Transverse colon (tissue), 4 donors: ENCODE measurements at regions of chr6 and their contacts with region 1.

Region 1: DNA sequence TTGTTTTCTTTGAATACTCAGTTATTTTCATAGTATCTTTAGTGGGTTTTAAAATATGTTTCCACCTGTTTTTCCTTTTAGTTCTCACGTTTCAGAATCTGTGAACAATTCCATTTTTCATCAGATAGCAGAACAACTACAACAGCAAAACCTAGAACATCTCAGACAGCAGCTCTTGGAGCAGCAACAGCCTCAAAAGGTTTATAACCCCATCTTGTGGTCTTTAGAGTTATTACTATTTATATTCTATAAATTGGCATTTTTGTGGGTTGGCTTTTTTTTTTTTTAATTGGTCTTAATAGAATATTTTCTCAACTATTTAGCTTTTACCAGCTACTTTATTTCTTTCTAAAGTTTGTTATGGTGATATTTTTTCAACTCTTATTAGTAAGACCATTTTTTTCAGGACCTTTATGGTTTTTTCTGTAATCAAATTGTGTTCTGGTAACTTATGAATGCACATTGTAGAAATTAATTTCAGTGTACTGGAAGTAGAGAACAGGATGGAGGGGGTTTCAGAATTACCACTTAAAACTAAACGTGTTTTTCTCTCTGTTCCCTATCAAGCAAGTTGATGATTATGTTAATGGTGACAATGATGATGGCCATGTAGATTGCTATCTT is 72.2 kb downstream of the SCAF8 start:
- DNase-seq: no peak
- H3K4me3 ChIP-seq: no peak overlapping the region
- H3K27ac ChIP-seq: no peak overlapping the region
- H3K4me1 ChIP-seq: peaks cover 0 to 4% (median 0%) of the 10 kb centered on the region in 4 donors
- H3K27me3 ChIP-seq: no peaks in the 10 kb centered on the region
- CTCF ChIP-seq: peak; percentile 21 to 41 (median 32)
- EP300 ChIP-seq: no peak
- POLR2A ChIP-seq: no peak

Region 2: DNA sequence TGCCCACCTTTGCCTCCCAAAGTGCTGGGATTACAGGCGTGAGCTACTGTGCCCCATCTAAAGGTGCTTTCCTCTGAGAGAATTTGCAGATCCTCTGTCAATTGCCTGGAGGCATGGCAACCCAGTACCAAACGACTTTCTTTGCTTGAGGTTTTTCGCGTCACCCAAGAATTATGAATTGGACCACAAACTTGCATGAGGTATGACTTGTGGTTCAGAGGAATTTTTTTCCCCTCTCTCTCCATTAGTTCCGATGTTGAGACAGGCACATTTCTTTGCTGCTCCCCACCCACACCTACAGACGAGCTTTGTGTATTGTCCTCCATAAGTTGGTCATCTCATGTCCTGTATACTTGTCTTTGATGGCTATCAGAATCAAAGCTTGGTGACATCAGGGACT is 83.9 kb before region 1 on chr6:
- in situ Hi-C with region 1: no loop called
- intact Hi-C with region 1: no loop called
- DNase-seq: no peak
- H3K4me3 ChIP-seq: no peak overlapping the region
- H3K27ac ChIP-seq: no peak overlapping the region
- H3K4me1 ChIP-seq: peaks cover 0 to 9% (median 4%) of the 10 kb centered on the region in 4 donors
- H3K27me3 ChIP-seq: no peaks in the 10 kb centered on the region
- CTCF ChIP-seq: no peak
- EP300 ChIP-seq: no peak
- POLR2A ChIP-seq: no peak

Region 3: GRCh38 chr6:154733012-154733625 is 72.3 kb before region 1 on chr6 and contains the start of gene SCAF8:
- in situ Hi-C with region 1: no loop called
- intact Hi-C with region 1: loop called (anchors 5 kb)
- DNase-seq: peak; percentile 85
- H3K4me3 ChIP-seq: peak within 1 kb of the TSS; percentile 75 to 91 (median 82)
- H3K27ac ChIP-seq: peak within 1 kb of the TSS; percentile 98 to 99 (median 98)
- H3K4me1 ChIP-seq: peaks cover 21 to 48% (median 34%) of the 10 kb centered on the region in 4 donors
- H3K27me3 ChIP-seq: no peaks in the 10 kb centered on the region
- CTCF ChIP-seq: peak; percentile 48 to 88 (median 74)
- EP300 ChIP-seq: no peak
- POLR2A ChIP-seq: peak; percentile 55
- total RNA-seq, gene SCAF8: 32.2 to 38.6 (median 33.4) TPM

Region 4: GRCh38 chr6:155939253-155939652 is 1133.9 kb after region 1 on chr6:
- in situ Hi-C with region 1: no loop called
- intact Hi-C with region 1: no loop called
- DNase-seq: no peak
- H3K4me3 ChIP-seq: no peak overlapping the region
- H3K27ac ChIP-seq: no peak overlapping the region
- H3K4me1 ChIP-seq: peaks cover 0 to 4% (median 0%) of the 10 kb centered on the region in 4 donors
- H3K27me3 ChIP-seq: no peaks in the 10 kb centered on the region
- CTCF ChIP-seq: no peak
- EP300 ChIP-seq: no peak
- POLR2A ChIP-seq: no peak